CD4-positive, alpha-beta T cell (primary cell): ENCODE measurements at regions of chr6 and their contacts with region 1.

Region 1: GRCh38 chr6:127737009-127737486 is 160.1 kb downstream of the C6orf58 start:
- DNase-seq: peak in 10 of 14 experiments; percentile 3 to 82 (median 24)
- ATAC-seq: peak; percentile 95
- H3K4me3 ChIP-seq: no peak overlapping the region
- H3K4me3 Mint-ChIP-seq: no peak overlapping the region
- H3K27ac ChIP-seq: no peak overlapping the region
- H3K27ac Mint-ChIP-seq: peak overlapping the region; percentile 56
- H3K4me1 ChIP-seq: no peaks in the 10 kb centered on the region
- H3K4me1 Mint-ChIP-seq: peaks cover 62% of the 10 kb centered on the region
- H3K27me3 ChIP-seq: no peaks in the 10 kb centered on the region
- H3K27me3 Mint-ChIP-seq: no peaks in the 10 kb centered on the region
- CTCF ChIP-seq: peak; percentile 85

Region 2: DNA sequence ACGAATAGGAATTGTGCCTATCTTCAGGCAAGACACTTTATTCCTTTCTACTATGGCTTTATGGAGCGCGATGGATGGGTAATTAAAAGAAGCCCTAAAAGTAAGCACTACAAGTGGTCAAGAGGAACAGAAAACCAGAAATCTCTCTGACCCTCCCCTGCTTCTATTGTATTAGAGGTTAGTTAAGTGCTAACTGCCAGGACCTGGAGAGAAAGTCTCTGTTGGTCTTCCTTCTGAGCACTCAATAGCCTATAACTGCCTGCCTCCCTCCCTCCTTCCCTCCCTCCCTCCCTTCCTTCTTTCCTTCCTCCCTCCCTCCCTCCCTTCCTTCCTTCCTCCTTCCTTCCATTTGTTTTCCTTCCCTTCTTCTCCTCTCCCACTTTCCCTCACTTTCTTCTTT is 26.4 kb before region 1 on chr6:
- CTCF ChIA-PET with region 1: no interaction called
- POLR2A ChIA-PET with region 1: no interaction called
- intact Hi-C with region 1: no loop called
- DNase-seq: no peak
- ATAC-seq: no peak
- H3K4me3 ChIP-seq: no peak overlapping the region
- H3K4me3 Mint-ChIP-seq: no peak overlapping the region
- H3K27ac ChIP-seq: no peak overlapping the region
- H3K27ac Mint-ChIP-seq: peak overlapping the region; percentile 56
- H3K4me1 ChIP-seq: no peaks in the 10 kb centered on the region
- H3K4me1 Mint-ChIP-seq: peaks cover 10% of the 10 kb centered on the region
- H3K27me3 ChIP-seq: no peaks in the 10 kb centered on the region
- H3K27me3 Mint-ChIP-seq: no peaks in the 10 kb centered on the region
- CTCF ChIP-seq: no peak

Region 3: DNA sequence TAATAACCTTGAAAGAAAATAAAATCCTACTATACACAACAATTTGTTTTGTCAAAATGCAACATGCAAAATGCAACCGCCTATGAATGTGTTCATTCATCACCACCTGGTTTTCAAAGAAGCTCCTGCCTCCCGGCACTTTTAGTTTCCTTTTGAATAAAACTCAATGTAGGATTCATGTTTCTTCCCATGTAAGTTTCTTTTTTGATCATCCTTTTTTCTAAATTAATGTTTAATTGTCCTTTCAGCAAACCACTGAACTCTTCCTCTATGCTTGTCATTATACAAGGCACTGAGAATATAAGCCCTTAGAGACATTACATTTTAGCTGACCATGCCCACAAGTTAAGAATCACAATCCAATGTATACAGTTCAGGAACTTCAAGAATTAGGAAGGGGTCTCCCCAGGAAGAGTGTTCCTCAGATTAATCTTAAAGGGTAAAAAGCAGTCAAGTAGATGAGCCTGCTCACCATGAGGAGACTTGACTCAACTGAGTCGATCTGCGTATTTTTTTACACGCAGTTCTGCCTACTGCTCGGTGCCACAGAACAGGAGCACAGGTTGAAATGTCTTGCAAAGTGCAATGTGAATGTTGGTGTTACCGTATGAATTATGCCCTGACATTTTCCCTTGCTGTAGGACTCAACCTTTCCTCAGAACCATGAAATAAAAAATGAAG is 171.1 kb after region 1 on chr6:
- CTCF ChIA-PET with region 1: no interaction called
- POLR2A ChIA-PET with region 1: no interaction called
- intact Hi-C with region 1: no loop called
- DNase-seq: peak in 5 of 14 experiments; percentile 10 to 67 (median 53)
- ATAC-seq: peak; percentile 75
- H3K4me3 ChIP-seq: peak overlapping the region; percentile 62
- H3K4me3 Mint-ChIP-seq: peak overlapping the region; percentile 86
- H3K27ac ChIP-seq: peak overlapping the region in 1 of 2 donors; percentile 79
- H3K27ac Mint-ChIP-seq: peak overlapping the region; percentile 94
- H3K4me1 ChIP-seq: peaks cover 10% of the 10 kb centered on the region
- H3K4me1 Mint-ChIP-seq: peaks cover 71% of the 10 kb centered on the region
- H3K27me3 ChIP-seq: no peaks in the 10 kb centered on the region
- H3K27me3 Mint-ChIP-seq: no peaks in the 10 kb centered on the region
- CTCF ChIP-seq: no peak

Region 4: DNA sequence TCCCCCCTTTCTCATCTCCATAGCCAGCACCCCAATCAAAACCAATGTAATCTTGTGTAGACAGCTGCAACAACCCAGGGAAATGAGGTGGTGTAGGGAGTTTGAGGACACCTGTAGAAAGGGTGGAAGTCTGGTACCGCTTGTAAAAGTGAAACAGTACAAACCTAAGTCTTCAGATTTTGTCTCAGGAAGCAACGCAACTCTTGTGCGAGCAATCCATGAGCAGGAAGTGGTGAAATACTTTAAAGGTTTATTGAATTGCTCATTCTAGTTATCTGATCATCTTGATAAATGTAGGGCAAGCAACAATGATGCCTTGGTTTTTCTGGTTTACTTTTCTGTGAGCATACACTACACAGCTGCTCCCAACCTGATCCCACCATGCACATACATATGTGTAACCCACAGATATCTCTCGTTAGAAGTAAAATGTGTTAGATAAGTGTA is 234.9 kb after region 1 on chr6:
- CTCF ChIA-PET with region 1: no interaction called
- POLR2A ChIA-PET with region 1: no interaction called
- intact Hi-C with region 1: loop called (anchors 10 kb)
- DNase-seq: peak; percentile 22 to 91 (median 42)
- ATAC-seq: peak; percentile 88
- H3K4me3 ChIP-seq: peak overlapping the region; percentile 53
- H3K4me3 Mint-ChIP-seq: peak overlapping the region; percentile 90
- H3K27ac ChIP-seq: peak overlapping the region; percentile 67 to 84
- H3K27ac Mint-ChIP-seq: peak overlapping the region; percentile 97
- H3K4me1 ChIP-seq: peaks cover 17% of the 10 kb centered on the region
- H3K4me1 Mint-ChIP-seq: peaks cover 75% of the 10 kb centered on the region
- H3K27me3 ChIP-seq: no peaks in the 10 kb centered on the region
- H3K27me3 Mint-ChIP-seq: no peaks in the 10 kb centered on the region
- CTCF ChIP-seq: no peak

Region 5: GRCh38 chr6:128327890-128328289 is 590.8 kb after region 1 on chr6:
- CTCF ChIA-PET with region 1: interaction called, 6 read pairs
- POLR2A ChIA-PET with region 1: no interaction called
- intact Hi-C with region 1: loop called (anchors 1 to 2 kb)
- DNase-seq: peak in 9 of 14 experiments; percentile 1 to 71 (median 5)
- ATAC-seq: peak; percentile 59
- H3K4me3 ChIP-seq: no peak overlapping the region
- H3K4me3 Mint-ChIP-seq: no peak overlapping the region
- H3K27ac ChIP-seq: no peak overlapping the region
- H3K27ac Mint-ChIP-seq: no peak overlapping the region
- H3K4me1 ChIP-seq: peaks cover 3% of the 10 kb centered on the region
- H3K4me1 Mint-ChIP-seq: no peaks in the 10 kb centered on the region
- H3K27me3 ChIP-seq: no peaks in the 10 kb centered on the region
- H3K27me3 Mint-ChIP-seq: no peaks in the 10 kb centered on the region
- CTCF ChIP-seq: peak; percentile 61

Region 6: DNA sequence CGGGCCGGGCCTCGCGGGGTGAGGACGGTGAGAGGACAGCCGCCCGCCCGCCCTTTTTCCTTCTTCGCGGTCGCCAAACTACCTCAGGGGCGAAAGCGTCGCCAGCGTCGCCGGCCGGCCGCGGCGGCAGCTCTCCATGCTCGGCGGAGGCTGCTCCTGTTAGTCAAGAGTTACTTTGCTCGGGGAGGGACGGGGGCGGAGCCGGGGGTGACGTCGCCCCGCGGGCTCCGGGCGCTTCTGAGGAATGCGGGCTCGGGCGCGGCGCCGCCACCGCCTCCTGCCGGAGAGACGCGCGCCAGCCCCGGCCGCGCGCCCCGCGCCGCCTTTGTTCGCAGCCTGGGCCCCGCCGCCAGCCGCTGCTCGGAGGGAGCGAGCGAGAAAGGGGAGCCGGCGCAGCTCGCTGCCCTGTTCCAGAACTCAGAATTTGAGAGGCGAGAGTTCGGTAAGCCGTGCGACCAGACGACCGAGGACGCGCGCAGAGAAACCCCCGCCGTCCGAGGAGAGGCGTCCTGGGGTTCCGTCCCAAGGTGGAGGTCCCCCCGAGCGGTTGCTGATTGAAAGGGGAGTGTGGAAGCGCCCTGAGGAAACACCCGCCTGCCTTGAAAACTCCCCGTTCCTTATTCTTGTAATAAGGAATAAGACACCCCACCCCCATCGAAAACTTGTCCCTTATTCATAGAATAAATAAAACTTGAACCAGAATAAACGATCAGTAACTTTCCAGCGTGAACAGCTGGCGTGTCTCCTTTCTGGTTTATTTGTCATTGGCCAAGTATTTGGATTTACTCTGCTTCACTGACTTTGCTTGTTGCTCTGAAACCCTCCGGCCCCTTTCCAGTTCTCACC is 783.6 kb after region 1 on chr6 and contains the start of gene PTPRK:
- CTCF ChIA-PET with region 1: no interaction called
- POLR2A ChIA-PET with region 1: no interaction called
- intact Hi-C with region 1: loop called (anchors 2 to 5 kb)
- DNase-seq: peak; percentile 72 to 92 (median 86)
- ATAC-seq: peak; percentile 84
- H3K4me3 ChIP-seq: peak within 1 kb of the TSS; percentile 80
- H3K4me3 Mint-ChIP-seq: peak within 1 kb of the TSS; percentile 98
- H3K27ac ChIP-seq: no peak within 1 kb of the TSS
- H3K27ac Mint-ChIP-seq: peak within 1 kb of the TSS; percentile 88
- H3K4me1 ChIP-seq: peaks cover 26% of the 10 kb centered on the region
- H3K4me1 Mint-ChIP-seq: peaks cover 19% of the 10 kb centered on the region
- H3K27me3 ChIP-seq: peaks cover 32 to 63% of the 10 kb centered on the region in 2 experiments
- H3K27me3 Mint-ChIP-seq: peaks cover 86% of the 10 kb centered on the region
- CTCF ChIP-seq: no peak
- total RNA-seq, gene PTPRK: 8.4 to 10.3 TPM

Region 7: DNA sequence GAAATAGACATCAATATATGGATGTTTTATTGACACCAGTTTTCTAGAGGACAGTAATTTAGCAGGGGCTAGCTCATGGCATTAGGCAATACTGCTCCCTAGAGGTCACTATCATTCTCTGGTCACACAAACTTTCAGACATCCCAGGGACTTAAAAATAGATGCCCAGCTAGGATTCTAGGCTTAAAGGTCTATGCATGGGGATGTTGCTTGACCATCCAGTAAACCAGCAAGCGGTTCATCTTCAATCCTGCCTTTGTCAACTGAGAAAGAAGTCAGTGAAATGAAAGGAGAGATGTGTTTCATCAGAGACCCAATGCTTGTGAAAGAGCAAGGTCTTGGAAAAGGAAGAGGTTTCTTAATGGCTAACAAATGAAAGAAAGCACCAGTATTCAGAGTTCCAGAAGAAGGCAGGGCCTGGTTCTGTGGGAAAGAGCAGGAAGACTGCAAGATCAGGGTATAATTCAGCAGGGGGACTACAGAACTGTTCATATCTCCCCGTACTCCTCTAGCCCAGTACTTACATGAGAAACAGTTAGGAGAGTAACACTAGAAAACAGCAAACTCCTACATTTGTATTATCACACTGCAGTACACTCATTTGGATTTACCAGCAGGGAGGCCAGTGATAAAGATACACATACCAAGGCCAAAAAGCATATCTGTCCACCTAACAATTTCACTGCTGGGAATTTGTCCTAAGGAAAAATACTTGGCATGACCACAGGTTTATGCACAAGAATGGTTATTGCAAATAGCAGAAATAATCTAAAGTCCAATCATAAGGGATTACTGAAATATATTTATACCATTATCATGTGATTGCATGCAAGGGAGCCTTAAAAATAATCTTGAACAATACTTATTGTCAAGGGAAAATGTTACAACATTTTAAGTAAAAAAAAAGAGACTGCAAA is 994.5 kb after region 1 on chr6:
- CTCF ChIA-PET with region 1: no interaction called
- POLR2A ChIA-PET with region 1: no interaction called
- intact Hi-C with region 1: loop called (anchors 2 kb)
- DNase-seq: peak in 3 of 14 experiments; percentile 9 to 38 (median 31)
- ATAC-seq: no peak
- H3K4me3 ChIP-seq: no peak overlapping the region
- H3K4me3 Mint-ChIP-seq: no peak overlapping the region
- H3K27ac ChIP-seq: no peak overlapping the region
- H3K27ac Mint-ChIP-seq: no peak overlapping the region
- H3K4me1 ChIP-seq: no peaks in the 10 kb centered on the region
- H3K4me1 Mint-ChIP-seq: no peaks in the 10 kb centered on the region
- H3K27me3 ChIP-seq: no peaks in the 10 kb centered on the region
- H3K27me3 Mint-ChIP-seq: peaks cover 24% of the 10 kb centered on the region
- CTCF ChIP-seq: peak; percentile 50

Region 8: DNA sequence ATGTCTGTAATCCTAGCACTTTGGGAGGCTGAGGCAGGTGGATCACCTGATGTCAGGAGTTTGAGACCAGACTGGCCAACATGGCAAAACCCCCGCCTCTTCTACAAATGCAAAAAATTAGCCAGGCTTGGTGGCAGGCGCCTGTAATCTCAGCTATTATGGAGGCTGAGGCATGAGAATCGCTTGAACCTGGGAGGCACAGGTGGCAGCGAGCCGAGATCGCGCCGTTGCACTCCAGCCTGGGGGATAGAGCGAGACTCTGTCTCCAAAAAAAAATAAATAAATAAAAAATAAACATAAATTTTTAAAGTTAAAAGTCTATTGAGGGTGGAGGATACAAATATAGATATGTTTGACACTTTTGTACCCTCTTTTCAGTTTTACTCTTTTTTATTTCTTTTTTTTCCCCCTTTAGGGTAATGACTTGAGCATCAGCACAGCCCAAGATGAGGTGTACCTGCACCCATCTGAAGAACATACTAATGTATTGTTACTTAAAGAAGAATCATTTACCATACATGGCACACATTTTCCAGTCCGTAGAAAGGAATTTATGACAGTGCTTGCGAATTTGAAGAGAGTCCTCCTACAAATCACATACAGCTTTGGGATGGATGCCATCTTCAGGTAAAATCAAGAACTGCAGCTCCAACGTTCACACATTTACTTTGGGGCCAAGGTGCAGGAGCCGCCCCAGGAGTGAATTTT is 1514.8 kb after region 1 on chr6:
- CTCF ChIA-PET with region 1: no interaction called
- POLR2A ChIA-PET with region 1: no interaction called
- intact Hi-C with region 1: loop called in 1 of 2 experiments (anchors 1 kb)
- DNase-seq: peak in 12 of 14 experiments; percentile 3 to 71 (median 17)
- ATAC-seq: peak; percentile 68
- H3K4me3 ChIP-seq: no peak overlapping the region
- H3K4me3 Mint-ChIP-seq: no peak overlapping the region
- H3K27ac ChIP-seq: no peak overlapping the region
- H3K27ac Mint-ChIP-seq: no peak overlapping the region
- H3K4me1 ChIP-seq: no peaks in the 10 kb centered on the region
- H3K4me1 Mint-ChIP-seq: peaks cover 12% of the 10 kb centered on the region
- H3K27me3 ChIP-seq: peaks cover 0 to 18% of the 10 kb centered on the region in 2 experiments
- H3K27me3 Mint-ChIP-seq: peaks cover 42% of the 10 kb centered on the region
- CTCF ChIP-seq: peak; percentile 78

Region 9: DNA sequence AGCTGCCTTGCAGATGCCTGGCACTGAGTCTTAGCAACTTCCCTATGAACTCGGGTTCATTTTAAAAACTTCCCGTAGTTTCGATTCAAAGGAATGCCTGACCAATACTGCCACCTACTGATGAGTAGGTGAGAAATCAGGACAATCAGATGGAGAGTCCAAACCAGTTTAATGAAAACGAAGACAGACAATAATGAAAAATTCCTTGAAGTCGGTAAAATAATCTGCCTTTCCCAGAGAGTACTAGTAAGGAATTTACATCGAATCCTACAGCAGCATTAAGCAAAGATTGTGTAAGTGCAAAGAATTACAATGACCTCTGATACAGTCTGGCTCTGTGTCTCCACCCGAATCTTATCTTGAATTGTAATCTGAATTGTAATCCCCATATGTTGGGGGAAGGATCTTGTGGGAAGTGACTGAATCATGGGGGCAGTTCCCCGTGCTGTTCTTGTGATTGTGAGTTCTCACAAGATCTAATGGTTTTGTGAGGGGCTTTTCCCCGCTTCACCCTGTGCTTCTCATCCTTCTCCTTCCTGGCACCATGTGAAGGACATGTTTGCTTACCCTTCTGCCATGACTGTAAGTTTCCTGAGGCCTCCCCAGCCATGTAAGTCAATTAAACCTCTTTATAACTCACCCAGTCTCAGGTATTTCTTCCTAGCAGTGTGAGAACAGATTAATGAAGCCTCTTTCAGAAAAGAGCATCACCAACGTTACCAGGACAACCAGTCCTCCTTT is 1838.5 kb after region 1 on chr6:
- CTCF ChIA-PET with region 1: no interaction called
- POLR2A ChIA-PET with region 1: no interaction called
- intact Hi-C with region 1: loop called in 1 of 2 experiments (anchors 5 kb)
- DNase-seq: peak in 4 of 14 experiments; percentile 5 to 54 (median 45)
- ATAC-seq: peak; percentile 49
- H3K4me3 ChIP-seq: peak overlapping the region; percentile 22
- H3K4me3 Mint-ChIP-seq: peak overlapping the region; percentile 34
- H3K27ac ChIP-seq: no peak overlapping the region
- H3K27ac Mint-ChIP-seq: no peak overlapping the region
- H3K4me1 ChIP-seq: no peaks in the 10 kb centered on the region
- H3K4me1 Mint-ChIP-seq: no peaks in the 10 kb centered on the region
- H3K27me3 ChIP-seq: no peaks in the 10 kb centered on the region
- H3K27me3 Mint-ChIP-seq: no peaks in the 10 kb centered on the region
- CTCF ChIP-seq: peak; percentile 84